ENCODE measurements at regions of chr17 and their contacts with region 1.

Region 1: DNA sequence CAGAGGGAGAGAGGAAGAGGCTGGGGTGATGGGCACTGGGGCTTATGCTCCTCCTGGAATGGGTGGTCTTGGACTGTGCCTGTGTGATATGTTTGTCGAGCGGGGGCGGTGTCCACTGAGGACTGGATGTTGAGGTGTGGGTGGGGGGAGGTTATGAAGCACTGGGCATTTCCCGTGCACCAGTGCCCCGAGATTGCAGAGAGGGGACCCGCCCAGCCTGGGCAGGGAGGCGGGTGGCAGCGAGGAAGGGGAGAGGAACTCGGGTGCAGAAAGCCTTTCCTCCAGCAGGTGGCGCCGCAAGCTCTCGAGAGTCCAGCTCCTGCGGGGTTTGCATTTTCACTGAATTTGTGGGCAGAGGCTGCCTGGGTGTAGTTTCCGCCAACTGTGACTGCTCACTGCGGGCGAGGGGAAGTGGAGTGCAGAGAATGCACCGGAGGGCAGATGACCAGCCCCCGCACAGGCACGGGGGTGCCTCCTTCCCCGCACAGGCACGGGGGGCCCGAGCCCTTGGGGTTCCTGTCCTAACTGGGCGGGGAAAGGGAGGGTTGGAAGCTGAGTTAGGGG is 190.6 kb downstream of the SEC14L1 start:
- DNase-seq: peak; percentile 97
- ATAC-seq: peak; percentile 92
- H3K4me3 Mint-ChIP-seq: peak overlapping the region; percentile 67
- H3K27ac Mint-ChIP-seq: peak overlapping the region; percentile 89
- H3K4me1 Mint-ChIP-seq: peaks cover 33% of the 10 kb centered on the region
- H3K27me3 Mint-ChIP-seq: no peaks in the 10 kb centered on the region

Region 2: DNA sequence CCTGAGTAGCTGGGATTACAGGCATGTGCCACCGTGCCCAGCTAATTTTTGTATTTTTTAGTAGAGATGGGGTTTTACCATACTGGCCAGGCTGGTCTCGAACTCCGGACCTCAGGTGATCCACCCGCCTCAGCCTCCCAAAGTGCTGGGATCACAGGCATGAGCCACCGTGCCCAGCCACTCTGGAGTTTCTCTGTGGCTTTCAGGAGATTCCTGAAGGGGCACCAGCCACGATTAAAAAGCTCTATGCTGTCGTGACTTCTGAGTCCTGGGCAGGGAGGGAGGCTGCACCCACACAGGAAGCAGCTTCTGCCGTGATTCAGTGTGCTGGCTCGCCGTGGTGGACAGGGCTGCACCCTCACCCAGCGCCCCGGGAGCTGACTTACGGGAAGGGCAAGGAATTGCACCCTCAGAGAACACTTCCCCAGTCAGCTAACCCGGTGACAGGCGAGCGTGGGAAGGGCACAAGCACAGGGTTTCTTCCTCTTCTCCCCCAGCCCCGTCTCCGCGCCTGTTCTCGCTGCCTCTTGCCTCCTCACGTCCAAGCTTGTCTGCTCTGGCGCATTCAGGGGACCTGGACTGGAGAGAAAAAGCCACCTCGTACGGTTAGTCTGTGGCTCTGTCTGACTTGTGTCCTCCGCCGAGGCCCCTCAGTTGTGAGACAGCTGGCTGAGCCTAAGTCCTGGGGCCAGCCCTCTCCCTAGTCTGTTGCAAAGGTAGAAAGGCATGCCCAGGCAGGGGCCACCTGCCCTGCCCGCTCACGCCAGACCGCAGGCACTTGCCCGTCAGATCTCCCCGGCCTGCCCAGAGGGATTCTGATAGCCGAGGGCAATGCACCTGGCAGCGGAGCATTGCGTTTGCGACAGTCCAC is 45.6 kb before region 1 on chr17:
- CTCF ChIA-PET with region 1: no interaction called
- DNase-seq: no peak
- ATAC-seq: no peak
- H3K4me3 Mint-ChIP-seq: no peak overlapping the region
- H3K27ac Mint-ChIP-seq: no peak overlapping the region
- H3K4me1 Mint-ChIP-seq: peaks cover 14% of the 10 kb centered on the region
- H3K27me3 Mint-ChIP-seq: peaks cover 26% of the 10 kb centered on the region

Region 3: DNA sequence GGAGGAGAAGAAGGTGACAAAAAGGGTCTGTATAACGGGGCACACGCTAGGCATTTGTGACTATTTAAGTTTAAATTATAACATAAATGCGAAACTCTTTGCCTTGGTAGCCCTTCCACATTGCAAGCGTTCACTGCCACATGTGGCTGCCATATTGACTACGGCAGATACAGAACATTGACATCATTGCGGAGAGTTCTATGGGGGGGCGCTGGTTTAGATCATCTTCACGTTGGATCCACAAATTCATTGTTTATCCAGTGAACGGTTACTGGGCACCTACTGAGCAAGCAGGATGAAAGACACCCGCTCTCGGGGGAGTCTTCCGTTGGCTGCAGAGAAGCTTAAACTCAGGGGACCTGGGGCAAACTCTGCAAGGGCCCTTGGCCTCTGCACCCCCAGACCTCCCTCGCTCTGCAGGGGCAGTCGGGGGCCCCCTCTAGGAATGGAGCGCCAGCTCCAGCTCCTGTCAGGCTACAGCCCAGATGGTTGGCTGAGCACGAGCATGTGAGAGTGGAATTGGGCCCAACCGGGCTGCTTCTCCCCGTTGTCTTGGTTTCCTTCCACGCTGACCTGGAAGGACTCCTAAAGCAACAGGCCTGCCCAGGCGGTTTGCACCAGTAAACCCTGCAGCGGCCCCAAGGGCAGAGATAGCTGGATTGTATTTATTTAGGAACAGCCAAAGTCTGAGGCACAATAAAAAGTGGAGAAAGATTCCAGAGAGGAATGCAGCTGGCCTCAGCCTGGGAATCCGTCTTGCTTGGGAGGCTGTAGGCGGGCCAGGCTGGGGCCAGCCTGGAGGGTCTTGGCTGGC is 18.4 kb before region 1 on chr17:
- CTCF ChIA-PET with region 1: no interaction called
- DNase-seq: no peak
- ATAC-seq: no peak
- H3K4me3 Mint-ChIP-seq: no peak overlapping the region
- H3K27ac Mint-ChIP-seq: no peak overlapping the region
- H3K4me1 Mint-ChIP-seq: no peaks in the 10 kb centered on the region
- H3K27me3 Mint-ChIP-seq: no peaks in the 10 kb centered on the region

Region 4: GRCh38 chr17:77343031-77343800 is 11.8 kb after region 1 on chr17:
- CTCF ChIA-PET with region 1: interaction called, 22 read pairs
- DNase-seq: peak; percentile 44
- ATAC-seq: peak; percentile 40
- H3K4me3 Mint-ChIP-seq: peak overlapping the region; percentile 66
- H3K27ac Mint-ChIP-seq: peak overlapping the region; percentile 95
- H3K4me1 Mint-ChIP-seq: peaks cover 41% of the 10 kb centered on the region
- H3K27me3 Mint-ChIP-seq: no peaks in the 10 kb centered on the region

Region 5: DNA sequence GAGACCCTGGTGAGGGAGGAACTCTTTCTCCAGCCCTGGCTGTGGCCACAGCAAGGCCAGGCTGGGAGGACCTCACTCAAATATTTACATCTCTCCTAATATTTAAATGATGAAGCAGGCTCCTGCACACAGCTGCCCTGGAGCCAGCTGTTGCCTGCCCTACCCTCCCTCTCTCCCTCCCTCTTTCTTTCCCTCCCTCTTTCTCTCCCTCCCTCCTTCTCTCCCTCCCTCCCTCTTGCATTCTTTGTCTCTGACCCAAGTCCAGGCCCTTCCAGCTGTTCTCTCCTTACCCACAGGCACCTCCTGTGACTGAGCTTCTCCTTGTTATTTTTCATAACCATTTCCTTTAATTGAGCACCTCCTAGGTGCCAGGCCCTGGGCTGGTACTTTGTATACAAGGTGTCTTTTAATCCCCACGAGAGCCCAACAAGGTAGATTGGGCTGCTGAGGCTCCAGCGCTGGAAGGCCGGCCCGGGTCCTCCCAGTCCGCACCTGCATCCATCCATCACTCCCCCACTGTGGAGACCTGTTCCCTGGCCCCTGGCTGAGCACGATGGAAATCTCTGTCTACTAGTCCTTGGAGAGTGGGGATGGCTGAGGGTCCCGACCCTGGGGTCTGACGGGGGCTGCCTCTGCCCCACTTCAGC is 51.7 kb after region 1 on chr17:
- CTCF ChIA-PET with region 1: interaction called, 40 read pairs
- DNase-seq: no peak
- ATAC-seq: no peak
- H3K4me3 Mint-ChIP-seq: no peak overlapping the region
- H3K27ac Mint-ChIP-seq: peak overlapping the region; percentile 72
- H3K4me1 Mint-ChIP-seq: peaks cover 80% of the 10 kb centered on the region
- H3K27me3 Mint-ChIP-seq: no peaks in the 10 kb centered on the region

Region 6: DNA sequence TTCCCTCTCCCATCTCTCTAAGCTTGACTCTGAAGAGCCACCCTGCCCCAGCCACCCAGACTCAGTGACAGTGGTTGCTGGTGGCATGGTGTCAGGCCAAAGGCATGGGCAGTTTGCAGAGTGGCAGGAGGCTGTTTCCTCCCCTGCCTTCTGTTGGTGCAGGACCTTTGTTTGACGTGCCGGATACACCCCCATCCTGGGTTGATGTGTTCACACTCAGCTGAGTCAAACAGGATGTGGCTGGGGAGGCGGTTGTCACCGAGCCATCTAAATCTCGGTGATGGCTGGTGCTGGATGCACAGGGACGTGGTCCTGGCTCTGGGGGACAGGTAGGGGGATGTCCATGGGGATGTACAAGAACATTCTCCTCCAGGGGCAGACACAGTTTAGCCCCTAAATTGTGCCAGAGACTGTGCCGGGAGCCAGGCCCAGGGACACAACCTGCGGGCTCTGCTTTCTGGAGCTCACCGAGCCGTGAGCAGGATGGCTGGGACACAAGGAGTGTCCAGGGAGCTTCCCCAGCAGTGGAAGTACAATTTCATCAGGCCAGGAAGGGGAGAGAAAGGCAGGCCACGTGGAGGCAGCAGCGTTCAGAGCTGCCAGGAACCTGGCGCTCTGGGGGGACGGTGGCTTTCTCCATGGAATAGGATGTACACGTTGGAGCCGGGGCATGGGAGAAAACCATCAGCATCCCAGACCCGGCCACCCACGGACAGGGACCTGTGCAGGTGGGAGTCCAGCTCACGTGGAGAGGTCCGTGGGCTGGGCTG is 73.6 kb after region 1 on chr17:
- CTCF ChIA-PET with region 1: interaction called, 38 read pairs
- DNase-seq: peak; percentile 96
- ATAC-seq: peak; percentile 84
- H3K4me3 Mint-ChIP-seq: peak overlapping the region; percentile 84
- H3K27ac Mint-ChIP-seq: peak overlapping the region; percentile 91
- H3K4me1 Mint-ChIP-seq: peaks cover 90% of the 10 kb centered on the region
- H3K27me3 Mint-ChIP-seq: no peaks in the 10 kb centered on the region

Region 7: GRCh38 chr17:77444984-77445759 is 113.8 kb after region 1 on chr17:
- CTCF ChIA-PET with region 1: interaction called, 17 read pairs
- DNase-seq: peak; percentile 95
- ATAC-seq: peak; percentile 62
- H3K4me3 Mint-ChIP-seq: peak overlapping the region; percentile 73
- H3K27ac Mint-ChIP-seq: peak overlapping the region; percentile 93
- H3K4me1 Mint-ChIP-seq: peaks cover 93% of the 10 kb centered on the region
- H3K27me3 Mint-ChIP-seq: no peaks in the 10 kb centered on the region

Region 8: DNA sequence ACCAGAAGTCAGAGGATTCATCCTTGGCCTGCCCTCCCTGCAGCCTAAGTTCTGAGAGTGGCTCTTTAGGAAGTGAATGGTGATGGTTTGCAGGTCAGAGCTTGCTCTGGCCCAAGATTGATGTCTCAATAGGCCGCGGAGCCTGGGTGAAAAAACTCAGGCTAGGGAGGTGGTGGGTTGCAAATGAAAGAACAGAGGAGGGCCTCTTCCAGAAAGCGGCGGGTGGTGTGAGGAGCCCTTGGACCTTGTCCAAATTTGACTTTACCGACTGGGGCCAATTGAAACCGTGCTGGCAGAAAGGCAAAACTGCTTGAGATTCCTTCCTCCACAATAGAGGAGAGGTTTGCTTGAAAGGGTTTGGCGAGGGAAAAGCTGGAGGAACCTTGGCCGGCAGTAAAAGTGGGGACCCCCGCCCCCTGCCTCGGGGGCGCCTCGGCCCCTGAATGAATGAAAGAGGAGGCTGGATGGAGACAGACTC is 140.6 kb after region 1 on chr17:
- CTCF ChIA-PET with region 1: interaction called, 10 read pairs
- DNase-seq: no peak
- ATAC-seq: no peak
- H3K4me3 Mint-ChIP-seq: peak overlapping the region; percentile 20
- H3K27ac Mint-ChIP-seq: peak overlapping the region; percentile 80
- H3K4me1 Mint-ChIP-seq: peaks cover 91% of the 10 kb centered on the region
- H3K27me3 Mint-ChIP-seq: no peaks in the 10 kb centered on the region